ENCODE measurements at regions of chr2 and their contacts with region 1.

Region 1: DNA sequence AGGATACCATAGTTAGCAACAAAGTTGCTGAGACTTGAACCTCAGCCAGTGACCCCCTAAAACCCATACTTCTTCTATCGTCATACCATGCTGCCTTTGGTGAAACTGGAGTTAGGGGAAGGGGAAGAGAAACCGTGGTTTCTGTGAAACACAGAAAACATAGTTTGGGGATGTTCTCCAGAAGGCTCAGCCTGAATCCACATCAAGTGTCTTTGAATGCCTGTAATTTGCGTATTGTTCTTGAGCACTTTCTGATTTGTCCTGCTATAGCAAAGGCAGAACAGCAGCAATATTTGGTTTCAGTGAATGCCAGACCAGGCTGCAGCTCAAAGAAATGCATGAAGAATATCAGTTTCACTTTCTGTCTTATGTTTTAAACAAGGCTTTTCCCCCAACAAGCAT is 258.7 kb downstream of the TTC32 start:
- DNase-seq: no peak
- H3K4me3 ChIP-seq: no peak overlapping the region
- H3K27ac ChIP-seq: no peak overlapping the region
- H3K4me1 ChIP-seq: no peaks in the 10 kb centered on the region
- H3K27me3 ChIP-seq: no peaks in the 10 kb centered on the region
- CTCF ChIP-seq: no peak

Region 2: DNA sequence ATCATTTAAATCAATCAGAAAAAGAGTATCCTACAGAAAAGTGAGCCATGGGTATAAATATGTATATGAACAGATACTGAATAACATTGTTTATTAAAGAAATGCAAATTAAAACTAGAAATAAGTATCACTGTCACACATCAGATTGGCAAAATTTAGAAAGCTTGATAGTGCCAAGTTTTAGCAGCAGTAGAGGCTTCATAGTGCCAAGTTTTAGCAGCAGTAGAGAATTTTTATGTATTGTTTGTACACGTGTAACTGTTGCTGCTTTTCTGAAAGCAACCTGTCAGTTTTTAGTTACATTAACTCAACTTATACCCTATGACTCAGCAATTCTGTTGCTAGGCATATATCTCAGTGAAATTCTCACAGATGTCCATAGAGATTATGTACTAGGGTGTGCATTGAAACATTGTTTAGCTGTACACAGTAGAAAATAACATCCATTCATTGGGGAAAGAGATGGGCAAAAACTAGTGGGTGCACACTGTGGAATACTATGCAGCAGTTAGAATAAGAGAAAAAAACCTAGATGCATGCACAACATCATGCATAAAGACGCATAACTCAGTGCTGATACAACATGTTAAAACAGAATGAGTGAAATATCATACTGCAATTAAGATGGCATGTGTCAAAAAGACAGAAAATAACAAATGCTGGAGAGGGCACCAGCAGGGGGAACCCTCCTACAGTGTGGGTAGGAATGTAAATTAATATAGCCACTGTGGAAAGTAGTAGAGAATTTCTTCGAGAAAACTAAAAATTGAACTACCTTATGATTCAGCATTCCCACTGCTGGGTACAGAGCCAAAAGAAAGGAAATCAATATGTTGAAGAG is 759.3 kb before region 1 on chr2:
- intact Hi-C with region 1: loop called (anchors 5 kb)
- DNase-seq: no peak
- H3K4me3 ChIP-seq: no peak overlapping the region
- H3K27ac ChIP-seq: no peak overlapping the region
- H3K4me1 ChIP-seq: no peaks in the 10 kb centered on the region
- H3K27me3 ChIP-seq: no peaks in the 10 kb centered on the region
- CTCF ChIP-seq: peak; percentile 31 to 33

Region 3: GRCh38 chr2:19851116-19851695 is 208.1 kb after region 1 on chr2:
- intact Hi-C with region 1: no loop called
- DNase-seq: no peak
- H3K4me3 ChIP-seq: no peak overlapping the region
- H3K27ac ChIP-seq: no peak overlapping the region
- H3K4me1 ChIP-seq: peaks cover 0 to 16% (median 8%) of the 10 kb centered on the region in 4 donors
- H3K27me3 ChIP-seq: no peaks in the 10 kb centered on the region
- CTCF ChIP-seq: no peak

Region 4: GRCh38 chr2:20913491-20913890 is 1270.4 kb after region 1 on chr2:
- intact Hi-C with region 1: no loop called
- DNase-seq: no peak
- H3K4me3 ChIP-seq: no peak overlapping the region
- H3K27ac ChIP-seq: no peak overlapping the region
- H3K4me1 ChIP-seq: peaks cover 0 to 21% (median 13%) of the 10 kb centered on the region in 4 donors
- H3K27me3 ChIP-seq: no peaks in the 10 kb centered on the region
- CTCF ChIP-seq: no peak

Measured in tibial artery (tissue), 4 donors.